Activated naive CD4-positive, alpha-beta T cell treated with anti-CD3 and anti-CD28 coated beads for 36 hours (primary cell): ENCODE measurements at regions of chr6 and their contacts with region 1.

Region 1: DNA sequence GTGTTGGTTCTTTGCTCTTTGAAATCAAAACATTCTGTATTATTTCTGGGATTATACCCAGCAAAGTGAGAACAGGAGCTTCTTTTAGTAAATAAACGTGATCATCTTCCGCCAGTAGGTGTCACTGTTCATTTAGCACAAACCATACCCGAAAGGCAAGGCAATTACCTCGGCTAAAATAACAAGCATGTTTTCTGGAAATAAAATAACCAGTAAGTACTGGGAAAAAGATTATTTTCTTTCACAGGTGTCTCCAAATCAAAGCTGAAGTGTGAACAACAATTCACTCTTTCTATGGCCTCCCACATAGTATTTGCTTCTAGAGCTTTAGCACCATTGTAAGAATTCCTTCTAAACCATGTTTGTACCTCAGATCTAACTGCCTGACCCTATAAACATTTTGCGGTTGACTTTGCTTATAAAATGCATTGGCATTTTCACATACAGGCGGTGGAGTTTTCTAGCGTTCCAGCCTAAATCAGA is 144.6 kb upstream of the AGPAT4 start:
- DNase-seq: peak; percentile 61
- H3K4me3 Mint-ChIP-seq: no peak overlapping the region
- H3K27ac Mint-ChIP-seq: no peak overlapping the region
- H3K4me1 Mint-ChIP-seq: no peaks in the 10 kb centered on the region
- H3K27me3 Mint-ChIP-seq: peaks cover 12% of the 10 kb centered on the region

Region 2: DNA sequence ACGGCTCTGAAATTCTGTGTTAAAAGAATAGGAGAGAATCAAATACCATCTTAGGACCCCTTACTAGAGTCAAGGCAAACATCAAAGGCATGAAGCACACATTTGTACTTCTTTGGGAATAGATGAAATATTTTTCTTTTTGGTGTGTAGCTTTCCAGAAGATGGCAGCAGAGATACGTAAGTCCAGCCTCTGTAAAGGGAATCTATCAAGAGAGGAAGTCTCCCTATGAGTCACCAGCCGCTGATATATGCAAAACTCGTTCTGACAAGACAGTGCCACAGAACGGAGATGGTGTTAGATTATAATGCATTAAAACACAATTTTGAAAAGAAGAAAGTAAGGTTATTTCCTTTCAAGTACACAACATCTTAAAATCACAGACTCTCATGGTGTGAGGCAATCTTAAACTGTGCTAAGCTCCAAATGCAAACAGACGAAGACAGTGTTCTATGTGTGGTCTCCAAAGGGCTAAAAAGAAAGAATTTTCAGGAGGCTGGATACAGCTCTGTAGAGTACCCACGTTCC is 24.6 kb before region 1 on chr6:
- CTCF ChIA-PET with region 1: interaction called, 25 read pairs
- intact Hi-C with region 1: loop called (anchors 1 kb)
- DNase-seq: peak; percentile 81
- H3K4me3 Mint-ChIP-seq: no peak overlapping the region
- H3K27ac Mint-ChIP-seq: no peak overlapping the region
- H3K4me1 Mint-ChIP-seq: no peaks in the 10 kb centered on the region
- H3K27me3 Mint-ChIP-seq: no peaks in the 10 kb centered on the region

Region 3: DNA sequence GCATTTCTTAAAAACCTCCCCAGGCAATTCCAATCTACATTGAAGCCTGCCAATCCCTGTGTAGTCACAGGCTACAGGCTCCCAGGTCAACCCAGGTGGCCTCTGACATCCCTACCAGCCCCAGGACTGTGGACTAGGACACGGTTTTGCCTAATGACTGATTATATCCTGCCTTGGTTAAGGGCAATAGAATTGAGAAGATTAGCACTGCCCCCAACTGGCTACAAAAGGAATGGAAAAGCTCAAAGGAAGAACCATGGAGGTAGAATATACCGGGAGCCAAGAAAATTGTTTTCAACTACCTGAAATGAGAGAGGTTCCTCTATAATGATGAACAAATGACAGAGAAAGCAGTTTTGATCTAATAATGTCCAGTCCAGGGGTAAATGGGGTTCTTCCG is 276.5 kb after region 1 on chr6:
- CTCF ChIA-PET with region 1: interaction called, 10 read pairs
- intact Hi-C with region 1: loop called (anchors 1 kb)
- DNase-seq: peak; percentile 6
- H3K4me3 Mint-ChIP-seq: no peak overlapping the region
- H3K27ac Mint-ChIP-seq: no peak overlapping the region
- H3K4me1 Mint-ChIP-seq: no peaks in the 10 kb centered on the region
- H3K27me3 Mint-ChIP-seq: no peaks in the 10 kb centered on the region

Region 4: GRCh38 chr6:161850562-161850961 is 432.1 kb after region 1 on chr6:
- CTCF ChIA-PET with region 1: no interaction called
- intact Hi-C with region 1: no loop called
- DNase-seq: no peak
- H3K4me3 Mint-ChIP-seq: no peak overlapping the region
- H3K27ac Mint-ChIP-seq: no peak overlapping the region
- H3K4me1 Mint-ChIP-seq: no peaks in the 10 kb centered on the region
- H3K27me3 Mint-ChIP-seq: no peaks in the 10 kb centered on the region

Region 5: GRCh38 chr6:161922631-161923119 is 504.2 kb after region 1 on chr6:
- CTCF ChIA-PET with region 1: no interaction called
- intact Hi-C with region 1: loop called (anchors 2 kb)
- DNase-seq: peak; percentile 44
- H3K4me3 Mint-ChIP-seq: no peak overlapping the region
- H3K27ac Mint-ChIP-seq: no peak overlapping the region
- H3K4me1 Mint-ChIP-seq: no peaks in the 10 kb centered on the region
- H3K27me3 Mint-ChIP-seq: no peaks in the 10 kb centered on the region